Activated T-helper 1 cell treated with anti-CD3 and anti-CD28 coated beads, Interleukin-12 subunit alpha, Interleukin-12 subunit beta, Interleukin-2, Interleukin-4 antibody, amounts not matched to agents 30 ng/mL and 10 ng/mL and 1 ng/mL, durations not matched to agents 14 hours and 24 hours and 36 hours (primary cell): ENCODE measurements at regions of chr15 and their contacts with region 1.

Region 1: GRCh38 chr15:70259028-70259424 is 161.3 kb upstream of the TLE3 start:
- DNase-seq: peak; percentile 15
- H3K4me3 Mint-ChIP-seq: peak overlapping the region; percentile 45
- H3K27ac Mint-ChIP-seq: no peak overlapping the region
- H3K4me1 Mint-ChIP-seq: peaks cover 37% of the 10 kb centered on the region
- H3K27me3 Mint-ChIP-seq: peaks cover 50% of the 10 kb centered on the region

Region 2: DNA sequence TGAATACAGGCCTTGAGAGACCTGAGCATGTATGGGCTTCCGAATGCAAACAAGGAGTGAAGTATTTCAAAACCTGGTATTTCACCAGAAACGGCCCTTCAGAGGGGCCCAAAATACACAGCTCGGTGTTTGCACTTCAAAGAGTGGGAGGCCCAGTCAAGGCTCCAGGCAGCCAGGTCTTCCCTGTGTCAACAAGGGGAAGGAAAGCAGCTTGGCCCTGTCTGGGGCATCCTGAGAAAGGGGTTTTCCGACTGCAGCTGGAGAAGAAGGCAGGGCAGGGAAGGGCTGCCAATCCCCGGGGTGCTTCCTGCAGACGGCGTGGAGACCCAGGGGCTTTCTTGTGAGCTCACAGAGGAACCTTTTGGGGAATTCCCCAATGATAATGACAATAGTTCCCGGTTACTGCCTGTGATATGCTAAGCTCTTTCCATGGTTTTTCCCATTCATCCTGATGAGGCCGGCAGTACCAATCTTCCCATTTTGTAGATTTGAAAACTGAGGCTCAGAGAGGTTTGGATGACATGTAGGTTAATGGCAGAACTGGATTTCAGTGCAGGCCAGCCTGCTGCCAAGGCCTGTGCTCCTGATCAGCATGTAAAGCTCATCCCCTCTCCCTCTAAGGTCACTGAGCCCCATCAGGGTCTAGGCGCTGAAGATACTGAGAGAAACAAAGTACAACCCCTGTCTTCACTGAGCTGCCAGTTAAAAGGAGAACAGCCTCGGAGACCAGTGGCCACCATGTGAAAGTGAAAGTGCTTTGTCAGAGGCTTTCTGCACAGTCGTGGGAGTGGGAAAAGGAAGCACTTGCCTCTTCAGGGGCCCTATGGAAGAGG is 118.3 kb before region 1 on chr15:
- intact Hi-C with region 1: loop called (anchors 5 kb)
- DNase-seq: peak; percentile 8
- H3K4me3 Mint-ChIP-seq: peak overlapping the region; percentile 54
- H3K27ac Mint-ChIP-seq: peak overlapping the region; percentile 53
- H3K4me1 Mint-ChIP-seq: peaks cover 33% of the 10 kb centered on the region
- H3K27me3 Mint-ChIP-seq: peaks cover 28% of the 10 kb centered on the region

Region 3: GRCh38 chr15:70234256-70234905 is 24.6 kb before region 1 on chr15:
- intact Hi-C with region 1: loop called (anchors 2 kb)
- DNase-seq: peak; percentile 22
- H3K4me3 Mint-ChIP-seq: no peak overlapping the region
- H3K27ac Mint-ChIP-seq: no peak overlapping the region
- H3K4me1 Mint-ChIP-seq: peaks cover 24% of the 10 kb centered on the region
- H3K27me3 Mint-ChIP-seq: peaks cover 19% of the 10 kb centered on the region

Region 4: GRCh38 chr15:70299931-70300869 is 41.2 kb after region 1 on chr15:
- intact Hi-C with region 1: loop called (anchors 1 kb)
- DNase-seq: peak; percentile 71
- H3K4me3 Mint-ChIP-seq: no peak overlapping the region
- H3K27ac Mint-ChIP-seq: peak overlapping the region; percentile 24
- H3K4me1 Mint-ChIP-seq: peaks cover 9% of the 10 kb centered on the region
- H3K27me3 Mint-ChIP-seq: peaks cover 22% of the 10 kb centered on the region

Region 5: GRCh38 chr15:70480196-70480856 is 221.3 kb after region 1 on chr15:
- intact Hi-C with region 1: loop called (anchors 1 kb)
- DNase-seq: peak; percentile 55
- H3K4me3 Mint-ChIP-seq: peak overlapping the region; percentile 50
- H3K27ac Mint-ChIP-seq: peak overlapping the region; percentile 25
- H3K4me1 Mint-ChIP-seq: peaks cover 81% of the 10 kb centered on the region
- H3K27me3 Mint-ChIP-seq: peaks cover 53% of the 10 kb centered on the region